ENCODE measurements at regions of chr1 and their contacts with region 1.

Region 1: GRCh38 chr1:156689035-156689952 is 12.1 kb upstream of the NES start:
- DNase-seq: peak; percentile 90 to 92
- H3K4me3 ChIP-seq: peak overlapping the region; percentile 16
- H3K4me3 Mint-ChIP-seq: peak overlapping the region; percentile 56
- H3K27ac Mint-ChIP-seq: peak overlapping the region; percentile 8
- H3K4me1 ChIP-seq: peaks cover 46% of the 10 kb centered on the region
- H3K4me1 Mint-ChIP-seq: peaks cover 23% of the 10 kb centered on the region
- H3K27me3 ChIP-seq: no peaks in the 10 kb centered on the region
- H3K27me3 Mint-ChIP-seq: no peaks in the 10 kb centered on the region
- CTCF ChIP-seq: peak; percentile 87 to 89

Region 2: DNA sequence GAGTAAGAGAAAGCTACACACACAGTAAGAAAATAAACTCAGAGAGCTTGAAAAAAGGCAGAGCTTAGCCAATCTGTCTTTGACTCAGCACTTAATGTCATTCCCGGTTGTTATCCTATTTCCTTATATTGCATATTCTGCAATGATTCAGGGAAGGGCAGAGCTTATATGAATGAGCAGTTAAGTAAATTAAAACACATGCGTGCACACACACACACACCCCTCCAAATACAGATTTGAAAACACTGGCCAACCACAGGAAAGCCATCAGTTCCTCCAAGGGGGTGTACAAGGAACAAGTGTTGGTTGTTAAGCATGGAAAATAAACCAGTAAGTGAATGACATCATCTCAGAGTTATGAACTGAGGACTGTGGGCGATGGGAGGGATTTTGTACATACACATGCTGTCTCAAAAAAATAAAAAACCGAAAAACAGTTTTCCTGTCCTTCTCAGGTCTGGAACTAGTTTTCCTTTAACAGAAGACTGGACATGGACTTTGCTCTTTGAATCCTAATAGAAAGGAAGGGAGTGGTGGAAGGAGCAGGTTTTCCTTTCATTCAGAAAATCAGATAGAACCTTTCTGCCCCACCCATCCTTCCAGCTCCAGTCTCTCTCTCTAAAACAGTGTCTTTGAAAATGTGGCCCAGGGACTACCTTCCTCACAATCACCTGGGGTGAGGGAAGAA is 117.9 kb before region 1 on chr1:
- CTCF ChIA-PET with region 1: no interaction called
- POLR2A ChIA-PET with region 1: no interaction called
- intact Hi-C with region 1: no loop called
- DNase-seq: no peak
- H3K4me3 ChIP-seq: peak overlapping the region; percentile 96
- H3K4me3 Mint-ChIP-seq: peak overlapping the region; percentile 97
- H3K27ac Mint-ChIP-seq: peak overlapping the region; percentile 83
- H3K4me1 ChIP-seq: peaks cover 15% of the 10 kb centered on the region; the same call in 1 of the 2 replicates
- H3K4me1 Mint-ChIP-seq: peaks cover 18% of the 10 kb centered on the region
- H3K27me3 ChIP-seq: no peaks in the 10 kb centered on the region
- H3K27me3 Mint-ChIP-seq: no peaks in the 10 kb centered on the region
- CTCF ChIP-seq: no peak

Region 3: GRCh38 chr1:156659994-156660751 is 29.1 kb before region 1 on chr1:
- CTCF ChIA-PET with region 1: interaction called, 14 read pairs
- POLR2A ChIA-PET with region 1: interaction called, 3 read pairs
- intact Hi-C with region 1: no loop called
- DNase-seq: peak; percentile 95 to 97
- H3K4me3 ChIP-seq: peak overlapping the region; percentile 19
- H3K4me3 Mint-ChIP-seq: peak overlapping the region; percentile 77
- H3K27ac Mint-ChIP-seq: peak overlapping the region; percentile 92
- H3K4me1 ChIP-seq: peaks cover 43% of the 10 kb centered on the region
- H3K4me1 Mint-ChIP-seq: peaks cover 51% of the 10 kb centered on the region
- H3K27me3 ChIP-seq: no peaks in the 10 kb centered on the region
- H3K27me3 Mint-ChIP-seq: peaks cover 1% of the 10 kb centered on the region
- CTCF ChIP-seq: peak; percentile 98

Region 4: DNA sequence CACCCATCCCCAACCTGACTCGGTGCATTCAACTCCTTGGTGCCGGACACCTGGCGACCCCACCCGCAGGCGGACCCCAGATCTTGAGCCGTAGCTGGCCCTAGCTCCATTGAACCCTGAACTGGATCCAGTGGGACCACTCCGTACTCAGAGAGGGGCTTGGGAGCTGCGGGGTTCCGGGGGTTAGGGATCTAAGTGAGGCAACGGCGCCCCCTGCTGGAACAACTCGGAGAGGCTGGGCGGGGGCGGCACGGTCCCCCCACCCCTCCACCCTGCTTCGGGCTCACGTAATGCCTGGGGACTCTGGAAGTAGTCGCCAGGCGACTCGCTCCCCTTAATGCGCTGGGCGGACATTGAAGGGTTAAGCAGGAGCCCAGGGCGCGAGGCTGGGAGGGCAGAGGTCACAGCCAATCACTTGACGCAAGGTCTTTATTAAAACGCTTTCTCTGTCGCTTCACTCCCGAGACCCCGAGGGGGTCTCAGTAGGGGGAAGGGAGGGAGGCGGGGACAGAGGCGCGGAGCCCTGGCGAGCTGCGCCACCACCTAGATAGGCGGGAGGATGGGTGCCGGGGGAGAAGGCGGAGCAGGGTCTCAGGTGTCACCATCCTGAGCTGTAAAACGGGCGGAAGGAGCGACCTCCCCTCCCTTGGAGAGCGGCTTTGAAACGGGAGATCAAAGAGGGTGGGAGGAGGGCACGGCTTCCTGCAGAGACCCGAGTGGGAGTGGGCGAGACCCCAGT is 16.8 kb after region 1 on chr1:
- CTCF ChIA-PET with region 1: interaction called, 190 read pairs
- POLR2A ChIA-PET with region 1: interaction called, 19 read pairs
- intact Hi-C with region 1: loop called (anchors 1 kb)
- DNase-seq: peak; percentile 79 to 83
- H3K4me3 ChIP-seq: peak overlapping the region; percentile 53
- H3K4me3 Mint-ChIP-seq: peak overlapping the region; percentile 90
- H3K27ac Mint-ChIP-seq: peak overlapping the region; percentile 86
- H3K4me1 ChIP-seq: peaks cover 7% of the 10 kb centered on the region
- H3K4me1 Mint-ChIP-seq: peaks cover 16% of the 10 kb centered on the region
- H3K27me3 ChIP-seq: no peaks in the 10 kb centered on the region
- H3K27me3 Mint-ChIP-seq: no peaks in the 10 kb centered on the region
- CTCF ChIP-seq: peak; percentile 73 to 87

Region 5: GRCh38 chr1:156728597-156729462 is 39.5 kb after region 1 on chr1 and contains the start of gene ISG20L2:
- CTCF ChIA-PET with region 1: interaction called, 262 read pairs
- POLR2A ChIA-PET with region 1: interaction called, 26 read pairs
- intact Hi-C with region 1: loop called (anchors 1 kb)
- DNase-seq: peak; percentile 95 to 96
- H3K4me3 ChIP-seq: peak within 1 kb of the TSS; percentile 90
- H3K4me3 Mint-ChIP-seq: no peak within 1 kb of the TSS
- H3K27ac Mint-ChIP-seq: peak within 1 kb of the TSS; percentile 96
- H3K4me1 ChIP-seq: peaks cover 13% of the 10 kb centered on the region; the same call in 1 of the 2 replicates
- H3K4me1 Mint-ChIP-seq: peaks cover 6% of the 10 kb centered on the region
- H3K27me3 ChIP-seq: no peaks in the 10 kb centered on the region
- H3K27me3 Mint-ChIP-seq: no peaks in the 10 kb centered on the region
- CTCF ChIP-seq: no peak
- total RNA-seq, gene ISG20L2: 42.3 and 44.1 TPM in 2 replicates

Region 6: DNA sequence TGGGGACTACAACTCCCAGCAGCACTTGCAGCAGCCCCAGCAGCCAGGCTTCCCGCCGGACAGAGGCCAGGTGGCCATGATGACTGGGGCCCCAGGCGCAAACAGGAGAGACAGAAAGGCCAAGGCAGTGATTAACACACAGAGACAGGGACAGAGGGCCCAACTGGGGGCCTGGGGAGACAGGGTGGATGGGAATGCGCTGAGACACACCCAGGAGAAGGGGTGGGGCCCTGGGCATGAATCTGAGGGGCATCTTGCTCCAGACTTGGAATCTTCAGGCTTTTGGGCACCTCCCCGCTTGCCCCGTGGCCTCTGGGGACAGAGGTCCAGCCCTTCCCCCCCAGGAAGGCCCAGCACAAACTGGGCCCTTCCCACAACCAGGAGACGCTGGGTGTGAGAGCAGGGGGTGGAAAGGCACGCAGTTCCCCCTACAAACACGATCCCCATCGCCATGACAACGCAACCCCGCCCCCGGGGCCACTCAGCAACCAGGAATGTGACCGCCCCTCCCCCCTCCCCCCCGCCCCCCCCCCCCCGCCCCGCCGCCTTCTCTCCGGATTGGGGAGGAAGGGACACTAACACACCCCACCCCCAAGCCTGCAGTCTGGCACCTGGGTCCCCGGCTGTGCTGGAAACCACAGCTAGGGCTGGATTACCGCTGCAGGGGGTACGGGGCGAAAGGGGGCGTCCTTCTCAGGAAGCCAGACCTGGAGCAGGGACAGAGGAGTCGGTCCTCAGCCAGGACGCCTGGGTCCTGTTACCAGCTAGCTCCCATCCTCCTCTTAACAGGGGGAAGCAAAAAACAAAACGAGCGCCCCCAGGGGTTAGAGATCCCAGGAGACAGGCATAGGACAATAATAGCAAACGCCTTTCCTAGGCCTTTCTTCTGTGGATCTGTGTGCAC is 57.7 kb after region 1 on chr1:
- CTCF ChIA-PET with region 1: interaction called, 17 read pairs
- POLR2A ChIA-PET with region 1: interaction called, 4 read pairs
- intact Hi-C with region 1: no loop called
- DNase-seq: peak; percentile 98
- H3K4me3 ChIP-seq: peak overlapping the region; percentile 47
- H3K4me3 Mint-ChIP-seq: peak overlapping the region; percentile 79
- H3K27ac Mint-ChIP-seq: peak overlapping the region; percentile 100
- H3K4me1 ChIP-seq: peaks cover 38% of the 10 kb centered on the region
- H3K4me1 Mint-ChIP-seq: peaks cover 33% of the 10 kb centered on the region
- H3K27me3 ChIP-seq: no peaks in the 10 kb centered on the region
- H3K27me3 Mint-ChIP-seq: no peaks in the 10 kb centered on the region
- CTCF ChIP-seq: peak; percentile 14 to 35

Region 7: DNA sequence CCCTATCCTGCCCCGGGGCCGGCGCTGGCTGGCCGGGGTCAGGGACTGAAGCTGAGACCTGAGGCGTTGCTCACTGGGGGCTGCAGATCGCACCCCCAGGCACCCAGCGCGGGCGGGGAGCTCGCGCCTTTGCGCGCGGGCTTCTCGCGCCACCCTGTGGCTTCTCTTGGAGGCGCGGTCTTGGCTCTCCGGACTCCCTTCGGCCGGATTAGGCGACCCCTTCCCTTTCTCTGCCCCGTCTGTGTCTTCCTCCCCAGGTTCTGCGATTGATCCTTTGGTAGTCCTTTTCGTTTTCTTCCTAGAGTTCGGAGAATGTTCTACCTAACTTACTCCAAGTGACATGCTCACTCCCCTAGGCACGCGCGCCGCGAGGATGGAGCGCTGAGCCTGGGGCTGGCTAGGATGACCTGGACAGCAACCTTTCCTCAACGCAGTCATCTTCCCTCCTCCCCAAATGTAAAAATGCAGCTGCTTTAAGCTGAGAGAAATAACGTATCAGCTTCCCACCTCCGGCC is 170.9 kb after region 1 on chr1:
- CTCF ChIA-PET with region 1: interaction called, 40 read pairs
- POLR2A ChIA-PET with region 1: no interaction called
- intact Hi-C with region 1: loop called (anchors 1 kb)
- DNase-seq: peak in 1 of 2 experiments; percentile 60
- H3K4me3 ChIP-seq: peak overlapping the region; percentile 27
- H3K4me3 Mint-ChIP-seq: peak overlapping the region; percentile 74
- H3K27ac Mint-ChIP-seq: no peak overlapping the region
- H3K4me1 ChIP-seq: peaks cover 33% of the 10 kb centered on the region
- H3K4me1 Mint-ChIP-seq: peaks cover 25% of the 10 kb centered on the region
- H3K27me3 ChIP-seq: peaks cover 7% of the 10 kb centered on the region
- H3K27me3 Mint-ChIP-seq: peaks cover 11% of the 10 kb centered on the region
- CTCF ChIP-seq: peak; percentile 88 to 90

Region 8: GRCh38 chr1:156927215-156928042 is 238.1 kb after region 1 on chr1:
- CTCF ChIA-PET with region 1: interaction called, 11 read pairs
- POLR2A ChIA-PET with region 1: no interaction called
- intact Hi-C with region 1: loop called (anchors 2 kb)
- DNase-seq: peak; percentile 85 to 88
- H3K4me3 ChIP-seq: peak overlapping the region; percentile 43
- H3K4me3 Mint-ChIP-seq: peak overlapping the region; percentile 64
- H3K27ac Mint-ChIP-seq: peak overlapping the region; percentile 22
- H3K4me1 ChIP-seq: no peaks in the 10 kb centered on the region
- H3K4me1 Mint-ChIP-seq: peaks cover 6% of the 10 kb centered on the region
- H3K27me3 ChIP-seq: peaks cover 3% of the 10 kb centered on the region; the same call in 1 of the 2 replicates
- H3K27me3 Mint-ChIP-seq: peaks cover 34% of the 10 kb centered on the region
- CTCF ChIP-seq: peak; percentile 66 to 91

Measured in Caco-2 (cell line).